ENCODE measurements at regions of chr12 and their contacts with region 1.

Region 1: GRCh38 chr12:102484428-102484958 is 4.1 kb upstream of the IGF1 start:
- DNase-seq: peak in 8 of 9 donors; percentile 11 to 58 (median 34)
- ATAC-seq: peak; percentile 55
- H3K4me3 ChIP-seq: peak overlapping the region; percentile 25
- H3K4me3 Mint-ChIP-seq: peak overlapping the region; percentile 30 to 82 (median 70)
- H3K27ac ChIP-seq: no peak overlapping the region
- H3K27ac Mint-ChIP-seq: peak overlapping the region in 1 of 9 donors; percentile 89
- H3K4me1 ChIP-seq: peaks cover under 1 to 5% of the 10 kb centered on the region in 2 donors
- H3K4me1 Mint-ChIP-seq: peaks cover 0 to 35% (median 7%) of the 10 kb centered on the region in 7 donors
- H3K27me3 ChIP-seq: no peaks in the 10 kb centered on the region
- H3K27me3 Mint-ChIP-seq: peaks cover 0 to 19% (median 9%) of the 10 kb centered on the region in 5 donors

Region 2: DNA sequence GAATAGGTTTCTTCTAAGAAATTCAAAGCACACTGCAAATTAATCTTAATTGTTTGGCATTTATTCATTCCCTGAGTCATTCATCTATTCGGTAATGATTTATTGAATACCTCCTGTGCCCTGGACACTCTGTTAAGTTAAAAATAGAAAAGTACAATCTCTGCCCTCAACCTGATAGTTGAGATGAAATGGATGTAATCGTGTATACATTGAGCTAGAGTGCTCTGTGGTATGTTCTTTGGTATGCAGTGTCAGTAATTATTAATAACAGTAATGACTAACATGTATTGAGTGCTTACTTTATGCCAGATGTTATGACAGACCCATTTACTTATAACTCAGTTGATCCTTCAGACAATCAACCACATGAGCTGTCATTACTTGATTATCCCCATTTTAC is 1156.9 kb before region 1 on chr12:
- CTCF ChIA-PET with region 1: no interaction called
- POLR2A ChIA-PET with region 1: no interaction called
- intact Hi-C with region 1: no loop called
- DNase-seq: no peak
- ATAC-seq: no peak
- H3K4me3 ChIP-seq: no peak overlapping the region
- H3K4me3 Mint-ChIP-seq: no peak overlapping the region
- H3K27ac ChIP-seq: no peak overlapping the region
- H3K27ac Mint-ChIP-seq: no peak overlapping the region
- H3K4me1 ChIP-seq: no peaks in the 10 kb centered on the region
- H3K4me1 Mint-ChIP-seq: no peaks in the 10 kb centered on the region
- H3K27me3 ChIP-seq: no peaks in the 10 kb centered on the region
- H3K27me3 Mint-ChIP-seq: no peaks in the 10 kb centered on the region

Region 3: DNA sequence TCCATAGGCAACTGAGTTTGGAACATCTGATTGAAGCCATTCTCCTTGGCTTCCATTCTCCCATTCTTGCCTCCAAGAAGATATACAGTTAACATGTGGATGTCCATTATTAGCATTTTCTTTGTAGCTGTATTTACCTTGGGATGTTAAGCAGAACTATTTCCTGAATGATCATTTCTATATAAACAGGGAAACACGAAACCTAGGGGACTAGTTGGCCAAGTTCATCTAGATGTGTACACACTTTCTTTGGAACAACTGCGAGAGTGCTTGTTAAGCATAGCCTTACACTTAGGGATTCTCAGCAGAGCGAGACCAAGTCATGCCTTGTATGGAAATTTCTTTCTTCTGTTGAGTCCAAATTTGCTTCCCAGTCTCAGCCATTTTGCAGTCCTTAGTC is 565.0 kb before region 1 on chr12:
- CTCF ChIA-PET with region 1: no interaction called
- POLR2A ChIA-PET with region 1: no interaction called
- intact Hi-C with region 1: loop called (anchors 1 kb)
- DNase-seq: no peak
- ATAC-seq: no peak
- H3K4me3 ChIP-seq: no peak overlapping the region
- H3K4me3 Mint-ChIP-seq: no peak overlapping the region
- H3K27ac ChIP-seq: no peak overlapping the region
- H3K27ac Mint-ChIP-seq: no peak overlapping the region
- H3K4me1 ChIP-seq: no peaks in the 10 kb centered on the region
- H3K4me1 Mint-ChIP-seq: peaks cover 0 to 13% (median 3%) of the 10 kb centered on the region in 7 donors
- H3K27me3 ChIP-seq: no peaks in the 10 kb centered on the region
- H3K27me3 Mint-ChIP-seq: peaks cover 0 to 5% (median 0%) of the 10 kb centered on the region in 5 donors

Region 4: GRCh38 chr12:102095675-102096263 is 388.7 kb before region 1 on chr12:
- CTCF ChIA-PET with region 1: no interaction called
- POLR2A ChIA-PET with region 1: no interaction called
- intact Hi-C with region 1: loop called in 1 of 2 experiments (anchors 1 kb)
- DNase-seq: no peak
- ATAC-seq: peak; percentile 56
- H3K4me3 ChIP-seq: no peak overlapping the region
- H3K4me3 Mint-ChIP-seq: no peak overlapping the region
- H3K27ac ChIP-seq: no peak overlapping the region
- H3K27ac Mint-ChIP-seq: no peak overlapping the region
- H3K4me1 ChIP-seq: no peaks in the 10 kb centered on the region
- H3K4me1 Mint-ChIP-seq: peaks cover 0 to 5% (median 3%) of the 10 kb centered on the region in 7 donors
- H3K27me3 ChIP-seq: no peaks in the 10 kb centered on the region
- H3K27me3 Mint-ChIP-seq: no peaks in the 10 kb centered on the region

Region 5: GRCh38 chr12:102119674-102120563 is 364.6 kb before region 1 on chr12 and contains the starts of genes NUP37 and PARPBP:
- CTCF ChIA-PET with region 1: no interaction called
- POLR2A ChIA-PET with region 1: no interaction called
- intact Hi-C with region 1: loop called in 1 of 2 experiments (anchors 1 kb)
- DNase-seq: peak; percentile 87 to 94 (median 91)
- ATAC-seq: peak; percentile 98
- H3K4me3 ChIP-seq: peak within 1 kb of the TSS; percentile 93
- H3K4me3 Mint-ChIP-seq: peak within 1 kb of the TSS; percentile 88 to 98 (median 93)
- H3K27ac ChIP-seq: peak within 1 kb of the TSS; percentile 91
- H3K27ac Mint-ChIP-seq: peak within 1 kb of the TSS; percentile 86 to 97 (median 92)
- H3K4me1 ChIP-seq: peaks cover 9 to 14% of the 10 kb centered on the region in 2 donors
- H3K4me1 Mint-ChIP-seq: peaks cover 14 to 49% (median 27%) of the 10 kb centered on the region in 7 donors
- H3K27me3 ChIP-seq: no peaks in the 10 kb centered on the region
- H3K27me3 Mint-ChIP-seq: no peaks in the 10 kb centered on the region
- total RNA-seq, gene NUP37: 11.9 to 47.5 (median 18.5) TPM
- total RNA-seq, gene PARPBP: 1.1 to 21.5 (median 1.5) TPM

Region 6: GRCh38 chr12:102169922-102170621 is 314.4 kb before region 1 on chr12:
- CTCF ChIA-PET with region 1: no interaction called
- POLR2A ChIA-PET with region 1: no interaction called
- intact Hi-C with region 1: loop called (anchors 5 kb)
- DNase-seq: peak in 2 of 9 donors; percentile 2 to 5
- ATAC-seq: peak; percentile 54
- H3K4me3 ChIP-seq: no peak overlapping the region
- H3K4me3 Mint-ChIP-seq: no peak overlapping the region
- H3K27ac ChIP-seq: no peak overlapping the region
- H3K27ac Mint-ChIP-seq: no peak overlapping the region
- H3K4me1 ChIP-seq: no peaks in the 10 kb centered on the region
- H3K4me1 Mint-ChIP-seq: peaks cover 0 to 17% (median 0%) of the 10 kb centered on the region in 7 donors
- H3K27me3 ChIP-seq: no peaks in the 10 kb centered on the region
- H3K27me3 Mint-ChIP-seq: no peaks in the 10 kb centered on the region

Region 7: GRCh38 chr12:102300824-102301461 is 183.6 kb before region 1 on chr12:
- CTCF ChIA-PET with region 1: no interaction called
- POLR2A ChIA-PET with region 1: no interaction called
- intact Hi-C with region 1: loop called in 1 of 2 experiments (anchors 1 kb)
- DNase-seq: peak in 1 of 9 donors; percentile 24
- ATAC-seq: peak; percentile 27
- H3K4me3 ChIP-seq: no peak overlapping the region
- H3K4me3 Mint-ChIP-seq: no peak overlapping the region
- H3K27ac ChIP-seq: no peak overlapping the region
- H3K27ac Mint-ChIP-seq: no peak overlapping the region
- H3K4me1 ChIP-seq: no peaks in the 10 kb centered on the region
- H3K4me1 Mint-ChIP-seq: peaks cover 0 to 14% (median 0%) of the 10 kb centered on the region in 7 donors
- H3K27me3 ChIP-seq: no peaks in the 10 kb centered on the region
- H3K27me3 Mint-ChIP-seq: peaks cover 0 to 30% (median 4%) of the 10 kb centered on the region in 5 donors

Region 8: DNA sequence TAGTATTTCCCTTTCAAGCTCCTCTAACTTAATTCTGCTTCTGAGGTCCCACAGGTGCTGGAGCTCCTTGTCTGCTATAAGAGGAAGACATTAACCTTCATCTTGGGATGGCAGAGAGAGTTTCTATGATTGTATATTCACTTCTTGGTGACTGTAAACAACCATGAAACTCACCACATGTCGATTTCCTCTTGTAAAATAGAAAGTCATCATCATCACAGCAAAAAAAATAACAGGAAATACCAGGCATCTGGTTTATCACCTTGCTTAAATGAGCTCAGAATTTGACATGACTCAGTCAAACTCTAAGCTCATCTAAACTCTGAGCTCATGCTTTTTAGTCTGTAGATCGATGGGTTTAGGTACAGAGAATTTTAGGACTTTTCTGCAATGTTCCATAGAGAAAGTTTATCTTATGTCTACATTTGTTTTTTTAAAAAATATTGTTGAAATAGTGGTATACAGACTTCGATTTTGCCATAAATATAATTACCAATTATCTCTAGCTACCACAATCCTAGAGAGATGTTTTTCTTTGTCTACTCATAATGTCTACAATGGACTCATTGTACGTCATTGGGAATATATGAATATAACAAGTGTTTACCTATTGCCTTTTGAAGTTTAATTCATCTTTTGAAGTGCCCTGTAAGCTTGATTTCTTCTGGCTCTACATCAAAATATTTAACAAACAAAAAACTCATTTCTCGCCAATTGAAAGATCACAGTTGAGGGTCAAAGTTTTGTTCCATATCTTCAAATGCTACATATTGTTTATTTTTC is 62.5 kb before region 1 on chr12:
- CTCF ChIA-PET with region 1: no interaction called
- POLR2A ChIA-PET with region 1: no interaction called
- intact Hi-C with region 1: loop called in 1 of 2 experiments (anchors 1 kb)
- DNase-seq: no peak
- ATAC-seq: no peak
- H3K4me3 ChIP-seq: no peak overlapping the region
- H3K4me3 Mint-ChIP-seq: peak overlapping the region in 1 of 10 donors; percentile 33
- H3K27ac ChIP-seq: no peak overlapping the region
- H3K27ac Mint-ChIP-seq: peak overlapping the region in 1 of 9 donors; percentile 85
- H3K4me1 ChIP-seq: peaks cover 0 to 8% of the 10 kb centered on the region in 2 donors
- H3K4me1 Mint-ChIP-seq: peaks cover 0 to 20% (median 0%) of the 10 kb centered on the region in 7 donors
- H3K27me3 ChIP-seq: no peaks in the 10 kb centered on the region
- H3K27me3 Mint-ChIP-seq: peaks cover 0 to 11% (median 6%) of the 10 kb centered on the region in 5 donors

Region 9: GRCh38 chr12:102522768-102523167 is 38.3 kb after region 1 on chr12:
- CTCF ChIA-PET with region 1: no interaction called
- POLR2A ChIA-PET with region 1: no interaction called
- intact Hi-C with region 1: no loop called
- DNase-seq: no peak
- ATAC-seq: no peak
- H3K4me3 ChIP-seq: no peak overlapping the region
- H3K4me3 Mint-ChIP-seq: no peak overlapping the region
- H3K27ac ChIP-seq: no peak overlapping the region
- H3K27ac Mint-ChIP-seq: no peak overlapping the region
- H3K4me1 ChIP-seq: no peaks in the 10 kb centered on the region
- H3K4me1 Mint-ChIP-seq: no peaks in the 10 kb centered on the region
- H3K27me3 ChIP-seq: no peaks in the 10 kb centered on the region
- H3K27me3 Mint-ChIP-seq: peaks cover 0 to 24% (median 5%) of the 10 kb centered on the region in 5 donors